Spleen (tissue), 13 donors: ENCODE measurements at regions of chr10 and their contacts with region 1.

Region 1: DNA sequence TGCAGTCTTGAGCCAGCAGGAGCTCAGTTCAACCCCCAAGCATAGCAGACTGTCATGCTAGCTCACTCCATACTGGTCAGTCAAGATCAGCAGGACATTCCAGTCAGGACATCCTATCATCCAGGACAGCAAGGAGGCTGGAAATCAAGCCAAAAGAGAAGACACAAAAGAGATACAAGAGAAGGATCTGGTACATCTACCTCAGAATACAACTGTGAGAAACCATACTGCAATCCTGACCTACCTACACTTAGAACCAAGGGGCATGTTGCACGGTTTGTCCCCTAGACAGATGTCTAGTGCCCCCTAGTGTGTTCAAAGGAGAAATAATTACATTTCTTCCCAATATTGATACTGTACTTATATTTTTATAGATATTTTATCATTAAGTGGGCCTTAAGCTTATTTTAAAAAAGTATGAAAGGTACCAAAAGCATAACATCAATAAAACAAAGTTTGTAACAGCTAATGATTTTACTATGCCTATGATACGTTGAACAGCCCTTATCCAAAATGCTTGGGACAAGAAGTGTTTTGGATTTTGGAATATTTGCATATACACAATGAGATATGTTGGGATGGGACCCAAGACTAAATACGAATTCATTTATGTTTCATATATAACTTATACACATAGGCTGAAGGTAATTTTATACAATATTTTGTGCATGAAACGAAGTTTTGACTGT is 26.7 kb downstream of the ERCC6 start:
- DNase-seq: no peak
- H3K4me3 ChIP-seq: no peak overlapping the region
- H3K27ac ChIP-seq: no peak overlapping the region
- H3K4me1 ChIP-seq: peaks cover 6 to 25% (median 16%) of the 10 kb centered on the region in 6 donors
- H3K27me3 ChIP-seq: no peaks in the 10 kb centered on the region
- CTCF ChIP-seq: peak in 7 of 11 experiments; percentile 28 to 59 (median 47)
- POLR2A ChIP-seq: no peak

Region 2: GRCh38 chr10:49187950-49188761 is 324.1 kb before region 1 on chr10 and contains the start of gene TMEM273:
- intact Hi-C with region 1: no loop called
- DNase-seq: peak; percentile 94
- H3K4me3 ChIP-seq: peak within 1 kb of the TSS in 7 of 8 donors; percentile 18 to 64 (median 23)
- H3K27ac ChIP-seq: peak within 1 kb of the TSS; percentile 17 to 90 (median 78)
- H3K4me1 ChIP-seq: peaks cover 37 to 86% (median 76%) of the 10 kb centered on the region in 6 donors
- H3K27me3 ChIP-seq: no peaks in the 10 kb centered on the region
- CTCF ChIP-seq: peak in 6 of 11 experiments; percentile 5 to 39 (median 22)
- POLR2A ChIP-seq: peak in 1 of 3 donors; percentile 46
- total RNA-seq, gene TMEM273: 25.6 to 46.9 (median 30.7) TPM

Region 3: GRCh38 chr10:49407552-49408137 is 104.6 kb before region 1 on chr10:
- intact Hi-C with region 1: loop called (anchors 5 kb)
- DNase-seq: peak; percentile 87
- H3K4me3 ChIP-seq: no peak overlapping the region
- H3K27ac ChIP-seq: no peak overlapping the region
- H3K4me1 ChIP-seq: peaks cover 0 to 4% (median 0%) of the 10 kb centered on the region in 6 donors
- H3K27me3 ChIP-seq: peaks cover 0 to 92% (median 6%) of the 10 kb centered on the region in 7 donors
- CTCF ChIP-seq: peak; percentile 45 to 89 (median 78)
- POLR2A ChIP-seq: no peak